ENCODE measurements at regions of chr11 and their contacts with region 1.

Region 1: DNA sequence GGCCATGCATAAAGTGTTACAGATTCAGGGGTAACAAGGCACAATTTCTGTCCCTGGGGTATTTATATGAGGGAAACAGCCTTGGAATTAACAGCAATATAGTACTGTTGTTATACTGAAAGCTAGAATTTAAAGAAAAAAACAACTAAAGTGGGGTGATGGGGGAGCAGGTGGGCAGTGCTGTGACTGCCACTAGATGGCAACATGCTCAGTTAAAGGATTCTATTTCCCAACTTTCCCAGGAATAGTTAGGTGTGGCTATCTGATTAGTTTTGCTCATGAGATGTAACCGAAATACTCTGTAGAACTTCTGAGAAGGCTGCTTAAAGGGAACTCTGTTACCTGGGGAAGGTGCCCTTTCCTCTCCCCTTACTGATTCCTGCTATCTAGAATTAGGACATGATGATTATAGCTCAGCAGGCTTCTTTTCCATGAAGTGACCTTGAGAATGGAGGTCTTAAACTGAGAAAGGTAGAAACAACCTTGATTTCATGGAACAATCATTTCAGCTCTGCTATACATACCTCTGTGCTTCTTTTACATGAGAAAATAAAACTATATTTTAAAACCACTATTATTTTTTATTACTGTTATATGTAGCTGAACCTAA is 102.6 kb downstream of the RELT start:
- DNase-seq: no peak
- H3K4me3 ChIP-seq: no peak overlapping the region
- H3K27me3 ChIP-seq: no peaks in the 10 kb centered on the region
- CTCF ChIP-seq: peak; percentile 92

Region 2: GRCh38 chr11:73372371-73372993 is 106.4 kb before region 1 on chr11:
- CTCF ChIA-PET with region 1: no interaction called
- POLR2A ChIA-PET with region 1: no interaction called
- DNase-seq: no peak
- H3K4me3 ChIP-seq: no peak overlapping the region
- H3K27me3 ChIP-seq: no peaks in the 10 kb centered on the region
- CTCF ChIP-seq: peak; percentile 47

Region 3: DNA sequence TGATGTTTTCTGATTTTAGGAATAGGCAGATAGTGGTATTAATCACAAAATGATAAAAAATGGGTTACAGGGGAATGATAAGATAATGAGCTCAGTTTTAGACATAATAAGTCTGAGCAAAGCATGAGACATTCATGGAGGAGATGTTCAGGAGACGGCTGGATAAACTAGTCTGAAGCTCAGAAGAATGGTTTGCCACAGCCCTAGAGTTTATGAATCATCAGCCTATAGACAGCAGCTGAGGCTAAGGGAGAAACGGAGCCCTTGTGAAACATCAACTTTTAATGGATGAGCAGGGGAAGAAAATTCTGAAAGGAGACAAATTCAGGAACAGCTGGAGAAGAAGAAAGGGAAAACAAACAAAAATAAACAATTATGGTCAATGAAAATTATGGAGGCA is 15.5 kb before region 1 on chr11:
- CTCF ChIA-PET with region 1: interaction called, 32 read pairs
- POLR2A ChIA-PET with region 1: no interaction called
- DNase-seq: no peak
- H3K4me3 ChIP-seq: no peak overlapping the region
- H3K27me3 ChIP-seq: no peaks in the 10 kb centered on the region
- CTCF ChIP-seq: no peak

Region 4: DNA sequence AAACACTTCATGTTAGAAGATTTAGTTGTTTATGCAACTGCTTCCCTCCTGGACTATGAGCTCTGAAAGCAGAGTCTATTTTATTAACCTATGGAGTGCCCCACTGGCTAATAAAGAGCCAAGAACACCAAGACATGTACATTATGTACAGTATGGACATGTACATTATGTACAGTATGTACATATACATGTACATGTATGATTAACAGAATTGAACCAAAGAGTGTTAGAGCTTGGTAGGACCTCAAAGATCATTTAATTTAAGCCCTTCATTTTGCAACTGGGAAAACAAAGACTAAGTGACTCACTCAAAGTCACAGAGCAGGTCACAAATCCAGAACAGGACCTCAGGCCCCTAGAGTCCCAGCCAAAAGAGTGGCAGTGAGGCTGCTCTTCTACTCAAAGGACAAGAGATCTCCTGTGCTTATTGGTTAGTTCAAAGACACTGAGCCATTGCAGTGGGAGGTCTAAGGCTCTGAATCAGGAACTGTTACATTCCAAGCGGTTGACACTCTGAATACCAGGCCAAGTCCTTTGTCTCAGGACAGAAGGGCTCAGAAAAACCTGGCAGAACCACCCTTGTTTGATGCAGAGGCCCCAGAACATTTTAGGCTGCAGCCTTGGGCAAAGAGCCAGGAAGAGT is 15.2 kb after region 1 on chr11:
- CTCF ChIA-PET with region 1: interaction called, 24 read pairs
- POLR2A ChIA-PET with region 1: no interaction called
- DNase-seq: peak; percentile 31
- H3K4me3 ChIP-seq: no peak overlapping the region
- H3K27me3 ChIP-seq: no peaks in the 10 kb centered on the region
- CTCF ChIP-seq: no peak

Region 5: DNA sequence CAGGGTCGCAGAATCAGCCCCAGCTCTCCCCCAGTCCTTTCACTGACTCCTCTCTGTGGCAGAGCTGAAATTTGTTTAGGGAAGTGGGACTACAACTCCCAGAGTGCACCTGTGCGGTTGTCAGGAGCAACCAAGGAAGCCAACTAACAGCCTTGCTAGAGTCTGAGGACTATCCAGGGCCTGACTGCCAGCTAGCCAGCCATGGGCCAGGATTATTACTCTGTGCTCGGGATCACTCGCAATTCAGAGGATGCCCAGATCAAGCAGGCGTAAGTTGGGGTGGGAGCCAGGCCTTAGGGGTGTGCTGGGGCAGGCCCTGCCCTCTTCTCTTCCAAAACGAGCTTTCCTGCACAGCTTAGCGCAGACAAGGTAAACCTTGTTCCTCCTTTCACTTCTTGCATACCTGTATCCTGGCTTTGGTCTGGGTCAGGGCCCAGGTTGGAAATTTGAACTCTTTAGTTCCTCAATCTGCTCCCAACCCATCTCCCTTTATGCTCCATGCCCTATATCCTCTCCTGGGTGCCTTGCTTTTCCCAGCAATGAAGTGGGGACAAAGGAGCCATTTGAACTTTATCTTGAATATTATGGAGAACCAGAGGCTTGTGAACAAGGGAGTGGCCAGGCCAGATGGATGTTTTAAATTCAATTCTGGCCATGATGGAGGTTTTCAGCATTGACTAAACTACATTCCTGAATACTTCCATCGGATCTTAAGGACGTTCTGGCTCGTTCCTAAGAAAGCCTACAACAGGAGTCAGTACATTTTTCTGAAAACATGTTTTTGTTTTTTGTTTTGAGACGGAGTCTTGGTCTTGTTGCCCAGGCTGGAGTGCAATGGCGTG is 472.2 kb after region 1 on chr11 and contains the start of gene DNAJB13:
- CTCF ChIA-PET with region 1: no interaction called
- POLR2A ChIA-PET with region 1: no interaction called
- DNase-seq: no peak
- H3K4me3 ChIP-seq: no peak within 1 kb of the TSS
- H3K27me3 ChIP-seq: no peaks in the 10 kb centered on the region
- CTCF ChIP-seq: no peak
- polyA plus RNA-seq, gene DNAJB13: 0.40 and 0.47 TPM in 2 replicates

Measured in BJ (cell line).